PC-9 (cell line): ENCODE measurements at regions of chr4 and their contacts with region 1.

Region 1: GRCh38 chr4:43132010-43132582 is 239.6 kb downstream of the GRXCR1 start:
- DNase-seq: peak; percentile 20 to 36
- H3K4me3 ChIP-seq: no peak overlapping the region; the same call in 1 of the 2 replicates
- H3K27ac ChIP-seq: no peak overlapping the region
- H3K4me1 ChIP-seq: no peaks in the 10 kb centered on the region
- H3K27me3 ChIP-seq: no peaks in the 10 kb centered on the region
- CTCF ChIP-seq: peak; percentile 87

Region 2: GRCh38 chr4:42361456-42361855 is 770.6 kb before region 1 on chr4:
- CTCF ChIA-PET with region 1: no interaction called
- POLR2A ChIA-PET with region 1: no interaction called
- intact Hi-C with region 1: no loop called
- DNase-seq: no peak
- H3K4me3 ChIP-seq: no peak overlapping the region
- H3K27ac ChIP-seq: no peak overlapping the region
- H3K4me1 ChIP-seq: no peaks in the 10 kb centered on the region
- H3K27me3 ChIP-seq: peaks cover 11% of the 10 kb centered on the region
- CTCF ChIP-seq: no peak

Region 3: DNA sequence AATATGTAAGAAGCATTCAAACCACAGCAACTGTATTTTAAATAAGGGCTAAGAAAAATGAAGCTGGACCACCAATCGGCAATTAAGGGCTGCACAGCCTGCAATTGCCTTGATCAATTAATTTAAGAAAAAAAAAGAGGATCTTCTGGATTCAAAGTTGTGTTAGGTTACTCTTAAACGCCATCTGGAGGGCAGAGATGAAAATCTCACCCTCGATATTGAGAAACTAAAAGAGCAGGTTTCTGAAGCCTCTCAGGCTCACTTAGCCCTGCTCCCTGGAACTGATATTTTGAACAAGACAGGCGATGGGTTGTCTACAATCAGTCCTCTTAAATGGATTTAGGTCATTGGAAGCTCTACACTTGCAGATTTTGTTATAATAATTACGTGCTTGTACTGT is 339.9 kb after region 1 on chr4:
- CTCF ChIA-PET with region 1: no interaction called
- POLR2A ChIA-PET with region 1: no interaction called
- intact Hi-C with region 1: loop called (anchors 5 kb)
- DNase-seq: no peak
- H3K4me3 ChIP-seq: no peak overlapping the region
- H3K27ac ChIP-seq: no peak overlapping the region
- H3K4me1 ChIP-seq: no peaks in the 10 kb centered on the region
- H3K27me3 ChIP-seq: no peaks in the 10 kb centered on the region
- CTCF ChIP-seq: peak; percentile 42

Region 4: DNA sequence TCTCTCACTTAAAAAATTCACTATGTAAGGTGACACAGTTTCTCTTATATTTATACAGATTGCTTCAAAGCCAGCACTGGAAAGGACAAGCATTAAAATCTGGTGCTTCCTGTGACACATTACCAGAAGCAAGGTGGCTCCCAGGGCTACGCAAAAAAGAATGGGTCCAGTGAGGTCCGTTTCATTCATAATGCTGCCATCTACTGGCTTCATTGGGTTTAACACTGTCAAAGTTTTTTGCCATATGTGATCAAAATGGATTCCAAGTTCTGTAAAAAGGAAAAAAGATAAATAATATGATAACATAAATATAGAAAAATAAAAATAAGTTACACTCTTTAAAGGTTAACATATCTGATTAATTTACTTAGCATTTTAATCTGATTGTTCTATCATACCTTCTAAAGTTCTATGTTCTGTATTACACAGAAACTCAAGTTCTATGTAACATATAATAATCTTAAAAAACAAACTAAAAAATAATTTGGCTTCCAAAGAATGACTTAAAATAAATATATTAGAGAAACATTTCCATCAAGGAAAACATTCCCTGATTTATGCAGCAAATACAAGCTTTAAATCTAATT is 1497.3 kb after region 1 on chr4:
- CTCF ChIA-PET with region 1: no interaction called
- POLR2A ChIA-PET with region 1: no interaction called
- intact Hi-C with region 1: loop called (anchors 5 kb)
- DNase-seq: peak; percentile 12 to 36
- H3K4me3 ChIP-seq: no peak overlapping the region
- H3K27ac ChIP-seq: no peak overlapping the region
- H3K4me1 ChIP-seq: no peaks in the 10 kb centered on the region
- H3K27me3 ChIP-seq: no peaks in the 10 kb centered on the region; the same call in 1 of the 2 replicates
- CTCF ChIP-seq: peak; percentile 75